KBM-7 (cell line): ENCODE measurements at regions of chr1 and their contacts with region 1.

Region 1: GRCh38 chr1:109984456-109985275 is at the start of gene AHCYL1:
- DNase-seq: peak; percentile 99

Region 2: GRCh38 chr1:109643385-109644230 is 341.1 kb before region 1 on chr1:
- in situ Hi-C with region 1: loop called (anchors 25 kb)
- DNase-seq: peak; percentile 82

Region 3: GRCh38 chr1:109773146-109773899 is 211.3 kb before region 1 on chr1:
- in situ Hi-C with region 1: loop called (anchors 10 kb)
- DNase-seq: peak; percentile 83